Caco-2 (cell line): ENCODE measurements at regions of chr4 and their contacts with region 1.

Region 1: GRCh38 chr4:41124916-41125548 is 89.3 kb downstream of the APBB2 start:
- DNase-seq: peak; percentile 70 to 86
- H3K4me3 ChIP-seq: no peak overlapping the region
- H3K4me3 Mint-ChIP-seq: peak overlapping the region; percentile 60
- H3K27ac Mint-ChIP-seq: peak overlapping the region; percentile 96
- H3K4me1 ChIP-seq: peaks cover 92% of the 10 kb centered on the region
- H3K4me1 Mint-ChIP-seq: peaks cover 38% of the 10 kb centered on the region
- H3K27me3 ChIP-seq: no peaks in the 10 kb centered on the region
- H3K27me3 Mint-ChIP-seq: no peaks in the 10 kb centered on the region
- CTCF ChIP-seq: no peak

Region 2: DNA sequence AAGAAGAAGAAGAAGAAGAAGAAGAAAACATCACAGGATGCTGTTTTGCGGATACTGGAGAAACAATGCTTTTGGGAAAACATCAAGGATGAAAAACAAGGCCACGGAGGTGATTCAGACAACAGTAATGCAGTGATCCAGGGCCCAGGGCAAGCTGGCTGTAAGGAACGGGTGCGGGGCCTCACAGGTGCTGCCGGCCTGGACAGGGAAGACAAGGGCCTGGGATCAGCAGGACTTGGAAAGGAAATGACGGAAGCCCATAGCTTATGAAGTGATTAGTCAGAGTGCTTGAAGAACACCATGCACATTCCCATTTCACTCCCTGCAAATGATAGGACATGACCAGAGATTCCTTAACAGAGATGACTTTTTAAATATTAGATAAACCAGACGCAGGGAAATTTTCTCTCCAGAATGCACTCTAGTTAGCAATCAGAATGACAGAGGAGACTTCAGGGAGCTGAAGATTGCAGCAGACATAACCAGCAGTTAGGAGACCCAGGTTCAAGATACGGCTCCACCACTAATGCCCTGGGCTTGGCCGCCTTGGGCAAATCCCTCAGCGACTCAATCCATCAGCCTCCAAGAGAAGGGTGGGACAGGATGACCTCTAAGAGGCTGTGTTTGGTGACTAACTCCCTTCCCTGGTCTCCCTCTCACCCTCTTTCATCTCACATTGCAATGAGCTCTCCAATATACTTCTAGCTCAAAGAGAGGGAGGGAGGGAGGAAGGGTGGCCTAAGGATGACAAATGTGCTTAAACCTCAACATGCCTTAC is 35.2 kb after region 1 on chr4:
- CTCF ChIA-PET with region 1: no interaction called
- POLR2A ChIA-PET with region 1: no interaction called
- intact Hi-C with region 1: loop called (anchors 2 kb)
- DNase-seq: peak in 1 of 2 experiments; percentile 50
- H3K4me3 ChIP-seq: no peak overlapping the region
- H3K4me3 Mint-ChIP-seq: no peak overlapping the region
- H3K27ac Mint-ChIP-seq: peak overlapping the region; percentile 70
- H3K4me1 ChIP-seq: peaks cover 76% of the 10 kb centered on the region
- H3K4me1 Mint-ChIP-seq: peaks cover 62% of the 10 kb centered on the region
- H3K27me3 ChIP-seq: no peaks in the 10 kb centered on the region
- H3K27me3 Mint-ChIP-seq: no peaks in the 10 kb centered on the region
- CTCF ChIP-seq: no peak

Region 3: DNA sequence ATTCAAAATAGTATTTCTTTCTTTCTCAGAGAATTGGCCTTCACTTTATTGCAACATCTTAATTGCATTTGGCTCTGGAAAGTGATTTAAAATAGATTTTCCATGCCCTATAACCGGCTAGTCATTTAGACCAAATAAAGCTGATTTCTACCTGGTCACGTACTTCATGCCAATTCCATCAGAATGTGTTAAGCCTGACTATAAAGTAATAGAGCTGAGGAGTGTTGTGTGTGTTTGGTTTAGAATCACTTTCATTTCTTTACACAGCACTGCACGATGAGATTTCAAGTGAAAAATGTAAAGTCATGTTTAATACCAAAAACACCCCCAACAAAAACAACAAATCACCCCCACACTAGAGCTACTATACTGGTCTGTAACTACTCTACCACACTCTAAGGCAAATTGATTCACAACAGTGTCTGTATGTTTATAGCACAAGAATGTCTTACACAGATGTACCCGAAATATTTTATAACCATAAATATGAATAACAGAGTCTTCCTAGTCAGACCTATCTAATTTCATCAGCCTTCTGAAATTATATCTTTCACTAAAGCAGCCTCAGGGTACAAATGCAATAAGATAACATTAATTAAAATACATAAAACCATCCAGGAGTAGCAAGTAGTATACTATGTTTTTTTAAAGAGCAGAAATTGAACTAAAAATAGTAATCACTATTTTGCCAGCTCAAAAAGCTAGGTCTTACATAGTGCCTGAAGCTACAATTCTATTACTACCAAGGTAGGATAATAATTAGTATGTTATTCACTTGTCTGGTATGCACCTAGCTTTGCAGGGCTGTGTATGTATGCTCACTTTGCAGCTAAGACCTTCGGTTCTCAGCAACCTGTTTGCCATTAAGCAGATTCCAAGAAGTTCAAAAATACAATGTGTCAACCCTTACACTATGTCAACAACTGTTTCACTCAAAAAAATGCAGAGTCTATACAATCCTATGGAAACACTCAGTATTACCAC is 60.9 kb after region 1 on chr4:
- CTCF ChIA-PET with region 1: no interaction called
- POLR2A ChIA-PET with region 1: no interaction called
- intact Hi-C with region 1: loop called (anchors 2 kb)
- DNase-seq: no peak
- H3K4me3 ChIP-seq: no peak overlapping the region
- H3K4me3 Mint-ChIP-seq: no peak overlapping the region
- H3K27ac Mint-ChIP-seq: no peak overlapping the region
- H3K4me1 ChIP-seq: peaks cover 53% of the 10 kb centered on the region
- H3K4me1 Mint-ChIP-seq: peaks cover 24% of the 10 kb centered on the region
- H3K27me3 ChIP-seq: no peaks in the 10 kb centered on the region
- H3K27me3 Mint-ChIP-seq: no peaks in the 10 kb centered on the region
- CTCF ChIP-seq: no peak